ENCODE measurements at regions of chrX and their contacts with region 1.

Region 1: DNA sequence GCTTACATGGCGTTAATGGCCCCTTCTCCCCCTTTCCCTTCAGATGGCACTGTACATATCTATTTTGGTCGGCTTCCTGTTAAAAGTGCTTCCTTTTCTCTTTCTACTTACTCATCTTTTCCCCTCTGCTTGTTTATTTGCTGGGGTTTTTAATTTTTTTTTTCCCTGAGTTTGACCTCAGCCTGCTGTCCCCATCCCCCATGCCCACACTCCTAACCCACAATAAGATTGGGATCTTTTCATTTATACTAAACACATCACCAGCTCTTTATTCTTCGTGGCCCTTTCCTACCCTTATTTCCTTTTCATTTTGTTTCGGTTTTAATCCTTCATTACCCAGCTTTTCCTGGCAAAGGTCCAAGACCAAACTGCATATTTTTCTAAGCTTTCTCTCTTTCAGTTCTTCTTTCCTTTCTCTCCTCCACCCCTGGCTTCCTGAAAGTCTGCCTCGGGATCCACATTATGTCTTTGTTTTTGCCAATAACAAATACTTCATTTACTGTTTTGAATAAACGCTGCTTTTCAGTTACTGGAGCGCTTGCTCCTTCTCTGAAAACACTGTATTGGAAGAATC is 152.0 kb upstream of the USP9X start:
- DNase-seq: peak in 3 of 4 experiments; percentile 10 to 20 (median 11)
- ATAC-seq: no peak
- H3K4me3 ChIP-seq: peak overlapping the region; percentile 21; the same call in 1 of the 2 replicates
- H3K27ac ChIP-seq: peak overlapping the region; percentile 78
- H3K4me1 ChIP-seq: peaks cover 13 to 14% of the 10 kb centered on the region in 2 experiments; a peak in 4 of 5 replicates
- H3K27me3 ChIP-seq: no peaks in the 10 kb centered on the region
- CTCF ChIP-seq: no peak
- EP300 ChIP-seq: no peak
- POLR2A ChIP-seq: no peak
- RAD21 ChIP-seq: no peak

Region 2: GRCh38 chrX:40755291-40756249 is 177.6 kb before region 1 on chrX:
- CTCF ChIA-PET with region 1: no interaction called
- POLR2A ChIA-PET with region 1: no interaction called
- in situ Hi-C with region 1: no loop called
- intact Hi-C with region 1: no loop called
- DNase-seq: no peak
- ATAC-seq: no peak
- H3K4me3 ChIP-seq: no peak overlapping the region
- H3K27ac ChIP-seq: no peak overlapping the region
- H3K4me1 ChIP-seq: no peaks in the 10 kb centered on the region
- H3K27me3 ChIP-seq: no peaks in the 10 kb centered on the region; a peak in 1 of 5 replicates
- CTCF ChIP-seq: no peak
- EP300 ChIP-seq: no peak
- POLR2A ChIP-seq: no peak
- RAD21 ChIP-seq: no peak

Region 3: DNA sequence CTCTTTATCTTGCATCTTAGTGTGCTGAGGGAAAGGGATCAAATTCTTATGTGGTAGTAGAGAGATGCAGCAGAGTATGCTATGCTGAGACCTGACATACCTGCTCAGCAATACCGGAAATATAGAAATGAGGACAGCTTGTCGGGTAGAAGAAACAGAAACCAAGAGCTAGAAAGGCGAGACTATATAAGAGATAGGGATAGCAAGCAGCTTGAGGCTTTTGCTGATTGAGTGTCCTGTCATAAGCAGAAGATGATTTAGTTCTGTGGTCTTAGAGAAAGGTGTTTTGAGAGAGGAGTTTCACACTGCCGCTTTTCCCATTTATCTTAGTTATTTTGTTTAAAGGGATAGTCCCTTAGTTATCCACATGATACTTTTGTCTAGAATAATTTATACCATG is 183.7 kb after region 1 on chrX:
- CTCF ChIA-PET with region 1: no interaction called
- POLR2A ChIA-PET with region 1: no interaction called
- in situ Hi-C with region 1: no loop called
- intact Hi-C with region 1: loop called (anchors 10 kb)
- DNase-seq: peak in 2 of 4 experiments; percentile 10 to 22
- ATAC-seq: peak; percentile 59
- H3K4me3 ChIP-seq: no peak overlapping the region
- H3K27ac ChIP-seq: no peak overlapping the region
- H3K4me1 ChIP-seq: peaks cover 0 to 5% of the 10 kb centered on the region in 2 experiments; a peak in 2 of 5 replicates
- H3K27me3 ChIP-seq: no peaks in the 10 kb centered on the region
- CTCF ChIP-seq: no peak
- EP300 ChIP-seq: no peak
- POLR2A ChIP-seq: no peak
- RAD21 ChIP-seq: no peak

Region 4: DNA sequence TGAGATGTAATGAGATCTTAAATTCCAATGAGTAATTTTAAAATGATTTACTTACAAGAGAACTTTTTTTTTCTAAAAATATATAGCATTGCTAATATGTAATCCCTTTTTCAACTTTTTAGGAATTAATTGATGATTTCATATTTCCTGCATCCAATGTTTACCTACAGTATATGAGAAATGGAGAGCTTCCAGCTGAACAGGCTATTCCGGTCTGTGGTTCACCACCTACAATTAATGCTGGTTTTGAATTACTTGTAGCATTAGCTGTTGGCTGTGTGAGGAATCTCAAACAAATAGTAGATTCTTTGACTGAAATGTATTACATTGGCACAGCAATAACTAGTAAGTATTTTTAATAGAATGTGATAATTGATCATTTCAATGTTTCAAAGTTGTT is 265.2 kb after region 1 on chrX:
- CTCF ChIA-PET with region 1: no interaction called
- POLR2A ChIA-PET with region 1: no interaction called
- in situ Hi-C with region 1: no loop called
- intact Hi-C with region 1: no loop called
- DNase-seq: no peak
- ATAC-seq: no peak
- H3K4me3 ChIP-seq: no peak overlapping the region
- H3K27ac ChIP-seq: no peak overlapping the region
- H3K4me1 ChIP-seq: no peaks in the 10 kb centered on the region; a peak in 1 of 5 replicates
- H3K27me3 ChIP-seq: no peaks in the 10 kb centered on the region
- CTCF ChIP-seq: no peak
- EP300 ChIP-seq: no peak
- POLR2A ChIP-seq: no peak
- RAD21 ChIP-seq: no peak

Measured in K562 (cell line).